PC-9 (cell line): ENCODE measurements at regions of chr14 and their contacts with region 1.

Region 1: DNA sequence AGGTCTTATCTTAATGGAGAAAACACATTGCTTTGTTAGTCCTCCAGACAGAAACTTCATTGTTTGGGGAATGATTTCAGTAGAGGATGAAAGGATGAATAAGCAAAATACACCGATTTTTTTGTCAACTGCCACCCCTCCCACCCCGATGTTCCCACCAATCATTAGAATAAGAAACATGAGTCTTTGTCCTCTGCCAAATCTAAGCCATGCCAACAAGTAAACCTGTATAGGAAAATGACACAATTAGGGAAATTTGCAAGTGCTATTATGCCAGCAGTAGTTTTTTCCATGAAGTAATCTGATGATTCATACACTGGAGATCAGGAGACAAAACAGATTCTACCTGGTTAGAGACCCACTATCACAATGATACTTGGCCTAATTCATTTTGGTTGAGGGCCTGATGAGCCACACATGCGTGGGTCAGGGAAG is 35.9 kb downstream of the FLRT2 start:
- DNase-seq: no peak
- H3K4me3 ChIP-seq: no peak overlapping the region
- H3K27ac ChIP-seq: 0 out of 2 replicates have a peak overlapping the region, but pooled peaks have one; percentile 26
- H3K4me1 ChIP-seq: no peaks in the 10 kb centered on the region
- H3K27me3 ChIP-seq: no peaks in the 10 kb centered on the region
- CTCF ChIP-seq: no peak

Region 2: GRCh38 chr14:85516239-85517112 is 49.4 kb before region 1 on chr14:
- CTCF ChIA-PET with region 1: no interaction called
- POLR2A ChIA-PET with region 1: no interaction called
- intact Hi-C with region 1: no loop called
- DNase-seq: no peak
- H3K4me3 ChIP-seq: no peak overlapping the region
- H3K27ac ChIP-seq: no peak overlapping the region
- H3K4me1 ChIP-seq: no peaks in the 10 kb centered on the region
- H3K27me3 ChIP-seq: no peaks in the 10 kb centered on the region
- CTCF ChIP-seq: no peak

Region 3: DNA sequence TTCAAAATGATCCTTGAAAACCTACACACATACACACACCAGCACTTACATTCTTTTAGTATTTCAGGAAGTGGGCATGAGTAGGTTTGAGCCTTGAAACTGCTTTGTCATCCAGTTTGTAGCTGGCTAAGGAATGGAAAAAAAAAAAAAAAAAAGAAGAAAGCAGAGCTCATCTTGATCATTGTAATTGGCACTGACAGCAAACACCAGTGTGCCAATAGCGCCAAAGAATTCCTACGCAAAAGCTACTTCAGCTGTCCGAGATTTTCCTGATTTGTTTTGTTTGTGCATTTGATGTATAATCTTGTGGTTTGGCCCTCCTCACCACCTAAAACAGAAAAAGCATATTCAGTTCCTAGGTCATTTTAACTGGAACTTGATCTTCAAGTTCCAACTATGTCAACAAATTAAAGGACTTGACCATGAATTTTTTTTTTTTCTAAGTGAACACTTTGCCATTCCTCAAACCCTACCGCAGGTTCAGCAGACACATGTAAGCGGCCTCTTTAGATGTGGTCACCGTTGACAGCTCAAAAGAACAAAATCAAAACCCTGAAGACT is 21.4 kb after region 1 on chr14:
- CTCF ChIA-PET with region 1: no interaction called
- POLR2A ChIA-PET with region 1: no interaction called
- intact Hi-C with region 1: loop called (anchors 2 kb)
- DNase-seq: peak; percentile 15 to 64
- H3K4me3 ChIP-seq: no peak overlapping the region
- H3K27ac ChIP-seq: peak overlapping the region; percentile 70
- H3K4me1 ChIP-seq: no peaks in the 10 kb centered on the region
- H3K27me3 ChIP-seq: no peaks in the 10 kb centered on the region
- CTCF ChIP-seq: no peak